ENCODE measurements at regions of chr12 and their contacts with region 1.

Region 1: GRCh38 chr12:9464408-9464807 is 143.3 kb downstream of the KLRB1 start:
- DNase-seq: no peak
- H3K4me3 ChIP-seq: no peak overlapping the region
- H3K27ac ChIP-seq: no peak overlapping the region
- H3K4me1 ChIP-seq: peaks cover 0 to 7% (median 6%) of the 10 kb centered on the region in 4 experiments
- H3K27me3 ChIP-seq: no peaks in the 10 kb centered on the region

Region 2: GRCh38 chr12:9372202-9372601 is 92.2 kb before region 1 on chr12:
- CTCF ChIA-PET with region 1: interaction called, 12 read pairs
- POLR2A ChIA-PET with region 1: no interaction called
- DNase-seq: peak; percentile 37 to 67 (median 56)
- H3K4me3 ChIP-seq: no peak overlapping the region
- H3K27ac ChIP-seq: no peak overlapping the region
- H3K4me1 ChIP-seq: peaks cover 0 to 3% (median 0%) of the 10 kb centered on the region in 4 experiments
- H3K27me3 ChIP-seq: no peaks in the 10 kb centered on the region